Head of caudate nucleus (tissue), 42 donors: ENCODE measurements at regions of chr9 and their contacts with region 1.

Region 1: GRCh38 chr9:34568774-34569173 is 20.8 kb downstream of the CNTFR start:
- DNase-seq: no peak

Region 2: GRCh38 chr9:34690983-34691935 is 122.5 kb after region 1 on chr9 and contains the start of gene CCL19:
- intact Hi-C with region 1: no loop called
- DNase-seq: no peak

Region 3: DNA sequence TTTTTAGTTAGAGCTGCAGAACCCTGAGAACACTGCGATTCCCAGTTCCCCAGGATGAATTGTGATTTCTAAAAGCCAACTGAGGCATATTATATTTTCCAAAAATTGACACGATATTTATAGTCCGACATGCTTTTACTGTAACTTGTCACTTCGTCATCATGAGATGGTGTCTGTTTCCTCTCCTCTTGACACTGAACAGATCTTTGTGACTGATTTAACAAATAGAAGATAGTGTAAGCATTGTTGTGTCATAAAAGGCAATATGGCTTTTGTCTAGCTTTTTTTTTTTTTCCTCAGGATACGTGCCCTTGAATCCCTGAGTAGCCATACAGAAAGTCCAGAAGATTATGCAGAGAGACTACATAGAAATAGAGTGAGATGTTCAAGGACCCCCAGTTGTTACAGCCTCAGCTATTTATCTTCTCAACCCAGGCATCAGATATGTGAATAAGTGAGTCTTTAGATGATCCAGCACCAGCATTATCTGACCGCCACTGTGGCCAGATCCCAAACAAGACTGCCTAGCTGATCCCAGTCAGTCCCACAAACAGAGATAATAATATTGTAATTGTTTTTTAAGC is 169.0 kb after region 1 on chr9:
- intact Hi-C with region 1: loop called (anchors 5 kb)
- DNase-seq: no peak